BJ (cell line): ENCODE measurements at regions of chr1 and their contacts with region 1.

Region 1: GRCh38 chr1:33455539-33456501 is 16.6 kb upstream of the ZSCAN20 start:
- DNase-seq: peak; percentile 56
- H3K4me3 ChIP-seq: no peak overlapping the region
- H3K27me3 ChIP-seq: no peaks in the 10 kb centered on the region
- CTCF ChIP-seq: peak; percentile 88

Region 2: DNA sequence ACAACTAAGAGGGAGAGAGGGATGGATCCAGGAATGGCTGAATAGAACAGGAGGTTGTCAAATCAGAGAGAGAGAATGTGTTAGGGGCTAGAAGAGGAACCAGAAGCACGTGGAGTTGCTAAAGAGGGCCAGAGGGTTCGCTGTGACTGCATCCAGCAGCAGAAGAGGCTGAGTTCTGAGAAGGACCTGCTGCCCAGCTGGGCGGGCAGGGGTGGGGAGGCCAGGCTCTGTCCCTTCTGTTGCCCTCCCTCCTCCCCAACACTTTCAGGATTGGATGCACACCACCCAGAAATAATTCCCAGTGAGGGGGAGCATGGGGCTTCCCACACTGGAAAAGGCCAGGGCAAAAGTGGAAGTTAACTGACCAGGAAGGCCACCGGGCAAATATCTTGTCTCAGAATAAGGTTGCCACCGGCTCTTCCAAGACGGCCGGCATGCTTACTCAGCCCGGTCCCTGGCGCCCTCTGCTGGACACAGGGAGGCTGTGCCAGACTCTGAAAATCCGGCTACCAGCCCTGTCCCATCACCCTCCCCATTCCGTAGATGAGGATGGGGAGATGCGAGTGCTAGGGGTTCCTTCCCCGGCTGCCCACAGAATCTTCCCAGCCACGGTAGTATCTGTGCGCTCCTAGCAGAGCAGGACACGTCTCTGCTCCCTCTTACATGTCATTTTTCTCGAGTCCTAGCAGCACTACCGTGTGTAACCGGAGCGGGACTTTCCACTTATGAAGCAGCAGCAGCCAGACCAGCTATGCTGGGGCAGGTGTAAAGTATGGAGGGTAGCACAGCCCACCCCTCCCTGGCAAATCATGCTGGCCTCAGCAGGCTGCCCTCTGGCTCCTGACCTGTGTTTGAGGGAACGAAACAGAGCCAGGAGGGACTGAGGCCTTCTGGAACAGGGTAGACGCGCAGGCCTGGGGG is 88.1 kb before region 1 on chr1:
- CTCF ChIA-PET with region 1: interaction called, 47 read pairs
- POLR2A ChIA-PET with region 1: no interaction called
- DNase-seq: no peak
- H3K4me3 ChIP-seq: no peak overlapping the region
- H3K27me3 ChIP-seq: no peaks in the 10 kb centered on the region
- CTCF ChIP-seq: peak; percentile 97

Region 3: GRCh38 chr1:33388805-33389771 is 66.7 kb before region 1 on chr1:
- CTCF ChIA-PET with region 1: interaction called, 10 read pairs
- POLR2A ChIA-PET with region 1: no interaction called
- DNase-seq: peak; percentile 77
- H3K4me3 ChIP-seq: no peak overlapping the region
- H3K27me3 ChIP-seq: no peaks in the 10 kb centered on the region
- CTCF ChIP-seq: no peak

Region 4: GRCh38 chr1:33443080-33443704 is 12.6 kb before region 1 on chr1:
- CTCF ChIA-PET with region 1: interaction called, 20 read pairs
- POLR2A ChIA-PET with region 1: no interaction called
- DNase-seq: no peak
- H3K4me3 ChIP-seq: no peak overlapping the region
- H3K27me3 ChIP-seq: 0 out of 2 replicates have a peak, but pooled peaks cover 1% of the 10 kb centered on the region
- CTCF ChIP-seq: no peak

Region 5: GRCh38 chr1:33472349-33472980 is 16.6 kb after region 1 on chr1 and contains the start of gene ZSCAN20:
- CTCF ChIA-PET with region 1: interaction called, 44 read pairs
- POLR2A ChIA-PET with region 1: no interaction called
- DNase-seq: peak; percentile 94
- H3K4me3 ChIP-seq: peak within 1 kb of the TSS; percentile 66
- H3K27me3 ChIP-seq: no peaks in the 10 kb centered on the region
- CTCF ChIP-seq: no peak
- polyA plus RNA-seq, gene ZSCAN20: 2.9 and 3.4 TPM in 2 replicates

Region 6: DNA sequence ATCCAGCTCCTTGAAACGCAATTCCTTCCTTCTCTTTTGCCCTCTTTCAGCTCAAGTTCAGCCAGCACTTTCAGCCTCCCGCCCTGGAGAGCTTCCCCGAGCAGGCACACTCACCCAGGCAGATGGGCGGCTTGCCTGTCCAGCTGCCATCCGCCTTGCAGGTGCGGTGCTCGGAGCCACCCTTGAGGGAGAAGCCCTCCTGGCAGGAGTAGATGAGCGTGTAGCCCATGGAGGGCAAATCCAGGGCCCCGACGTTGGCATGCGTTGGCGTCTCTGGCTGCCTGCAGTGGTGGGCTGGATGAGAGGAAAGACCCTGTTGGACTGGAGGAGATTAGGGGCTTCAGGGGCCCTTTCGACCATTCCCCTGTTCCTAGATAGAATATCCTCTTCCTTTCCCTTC is 77.1 kb after region 1 on chr1:
- CTCF ChIA-PET with region 1: no interaction called
- POLR2A ChIA-PET with region 1: no interaction called
- DNase-seq: no peak
- H3K4me3 ChIP-seq: no peak overlapping the region
- H3K27me3 ChIP-seq: no peaks in the 10 kb centered on the region
- CTCF ChIP-seq: no peak